ENCODE measurements at regions of chr6 and their contacts with region 1.

Region 1: DNA sequence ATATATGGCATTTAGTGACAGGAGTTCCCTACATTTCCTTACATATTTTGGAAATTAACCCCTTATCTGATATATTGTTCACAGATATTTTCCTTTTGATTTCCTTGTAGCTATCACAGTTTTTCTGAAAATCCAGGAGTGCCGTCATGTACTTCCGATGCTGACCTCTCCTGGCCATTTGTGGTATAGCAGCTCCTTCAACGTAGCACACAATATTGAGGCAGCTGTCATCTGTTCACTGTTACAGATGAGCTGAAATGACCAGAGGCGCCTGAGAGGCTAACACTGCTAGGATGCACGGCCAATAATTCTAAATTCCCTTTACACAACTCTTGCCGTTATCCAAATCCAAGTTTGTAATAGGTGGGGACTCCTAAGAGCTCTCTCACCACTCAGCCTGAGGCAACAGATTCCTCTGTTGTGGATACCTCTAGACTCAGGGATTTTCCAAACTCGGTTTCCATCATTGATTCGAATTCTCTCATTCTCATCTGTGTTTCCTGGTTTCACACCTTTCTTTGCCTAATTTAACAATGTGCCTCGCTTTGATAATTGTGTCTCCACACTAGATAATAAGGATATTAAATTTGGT is 53.0 kb downstream of the MMUT start:
- DNase-seq: peak; percentile 41
- H3K27ac ChIP-seq: no peak overlapping the region
- CTCF ChIP-seq: peak; percentile 85

Region 2: DNA sequence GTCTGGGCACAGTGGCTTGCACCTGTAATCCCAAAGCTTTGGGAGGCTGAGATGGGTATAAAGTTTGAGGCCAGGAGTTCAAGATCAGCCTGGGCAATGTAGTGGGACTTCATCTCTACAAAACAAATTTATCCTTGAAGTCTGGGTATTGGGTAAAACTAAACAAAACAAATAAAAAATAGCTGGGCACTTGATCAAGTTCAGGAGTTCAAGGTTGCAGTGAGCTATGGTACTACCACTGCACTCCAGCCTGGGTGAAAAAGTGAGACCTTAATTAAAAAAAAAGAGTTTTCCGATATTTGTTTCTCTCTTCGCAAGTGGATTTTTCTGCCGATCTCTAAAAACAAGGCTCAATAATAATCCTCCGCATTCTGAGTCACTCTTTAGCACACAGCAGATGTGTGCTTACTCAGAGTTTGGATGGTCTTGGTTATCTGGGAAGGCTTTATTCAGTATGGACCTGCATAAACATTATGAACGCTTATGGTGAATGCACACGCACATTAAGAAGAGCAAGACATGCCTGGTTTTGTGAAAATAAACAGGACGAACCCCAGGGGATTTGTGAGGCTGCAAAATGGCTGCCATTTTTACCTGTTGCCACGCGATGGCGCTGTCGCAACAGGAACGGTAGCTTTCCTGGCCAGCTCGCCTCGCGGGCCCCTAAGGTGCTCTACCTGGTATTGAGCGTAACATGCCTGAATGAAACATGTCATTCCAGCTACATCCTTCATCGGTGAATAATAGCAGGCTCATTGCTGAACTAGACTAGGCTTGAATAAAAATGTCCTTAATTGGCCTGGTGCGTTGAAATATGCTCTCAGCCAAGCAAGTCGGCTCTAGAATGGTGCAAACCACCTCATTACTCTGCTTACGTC is 1622.2 kb before region 1 on chr6:
- CTCF ChIA-PET with region 1: interaction called, 12 read pairs
- POLR2A ChIA-PET with region 1: no interaction called
- DNase-seq: peak; percentile 91
- H3K27ac ChIP-seq: peak overlapping the region; percentile 49
- CTCF ChIP-seq: peak; percentile 91